CD8-positive, alpha-beta T cell (primary cell): ENCODE measurements at regions of chr17 and their contacts with region 1.

Region 1: GRCh38 chr17:4966844-4967538 is 626 bp downstream of the SPAG7 start:
- DNase-seq: peak; percentile 87 to 99 (median 94)
- ATAC-seq: peak; percentile 79
- H3K4me3 ChIP-seq: peak overlapping the region; percentile 90
- H3K4me3 Mint-ChIP-seq: no peak overlapping the region
- H3K27ac ChIP-seq: peak overlapping the region; percentile 64 to 90
- H3K27ac Mint-ChIP-seq: peak overlapping the region; percentile 53
- H3K4me1 ChIP-seq: peaks cover 22% of the 10 kb centered on the region
- H3K4me1 Mint-ChIP-seq: peaks cover 19% of the 10 kb centered on the region
- H3K27me3 ChIP-seq: no peaks in the 10 kb centered on the region
- H3K27me3 Mint-ChIP-seq: no peaks in the 10 kb centered on the region
- CTCF ChIP-seq: no peak

Region 2: DNA sequence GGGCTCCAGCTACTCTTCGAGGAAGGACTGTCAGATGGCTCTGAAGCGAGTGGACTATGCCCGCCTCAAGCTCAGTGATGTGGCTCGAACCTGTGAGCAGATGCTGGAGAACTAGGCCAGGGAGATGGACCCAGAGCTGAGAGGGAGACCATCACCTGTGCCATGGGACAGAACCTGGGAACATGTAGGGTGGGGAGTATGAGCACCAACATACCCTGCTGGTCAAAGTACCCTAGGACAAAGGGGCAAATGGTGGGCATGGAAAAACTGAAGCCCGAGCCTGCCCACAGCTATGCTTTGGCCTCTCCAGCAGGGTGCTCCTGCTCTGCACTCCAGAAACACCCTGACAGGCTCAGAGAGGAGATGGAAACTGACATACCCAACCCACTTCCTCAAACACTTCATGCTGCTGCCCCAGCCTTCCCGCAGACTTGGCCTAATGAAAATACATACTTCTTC is 233.9 kb before region 1 on chr17:
- CTCF ChIA-PET with region 1: no interaction called
- POLR2A ChIA-PET with region 1: no interaction called
- intact Hi-C with region 1: loop called in 1 of 2 experiments (anchors 1 kb)
- DNase-seq: peak in 1 of 9 experiments; percentile 45
- ATAC-seq: no peak
- H3K4me3 ChIP-seq: no peak overlapping the region
- H3K4me3 Mint-ChIP-seq: peak overlapping the region; percentile 39
- H3K27ac ChIP-seq: no peak overlapping the region
- H3K27ac Mint-ChIP-seq: no peak overlapping the region
- H3K4me1 ChIP-seq: peaks cover 24% of the 10 kb centered on the region
- H3K4me1 Mint-ChIP-seq: peaks cover 30% of the 10 kb centered on the region
- H3K27me3 ChIP-seq: no peaks in the 10 kb centered on the region
- H3K27me3 Mint-ChIP-seq: no peaks in the 10 kb centered on the region
- CTCF ChIP-seq: no peak

Region 3: DNA sequence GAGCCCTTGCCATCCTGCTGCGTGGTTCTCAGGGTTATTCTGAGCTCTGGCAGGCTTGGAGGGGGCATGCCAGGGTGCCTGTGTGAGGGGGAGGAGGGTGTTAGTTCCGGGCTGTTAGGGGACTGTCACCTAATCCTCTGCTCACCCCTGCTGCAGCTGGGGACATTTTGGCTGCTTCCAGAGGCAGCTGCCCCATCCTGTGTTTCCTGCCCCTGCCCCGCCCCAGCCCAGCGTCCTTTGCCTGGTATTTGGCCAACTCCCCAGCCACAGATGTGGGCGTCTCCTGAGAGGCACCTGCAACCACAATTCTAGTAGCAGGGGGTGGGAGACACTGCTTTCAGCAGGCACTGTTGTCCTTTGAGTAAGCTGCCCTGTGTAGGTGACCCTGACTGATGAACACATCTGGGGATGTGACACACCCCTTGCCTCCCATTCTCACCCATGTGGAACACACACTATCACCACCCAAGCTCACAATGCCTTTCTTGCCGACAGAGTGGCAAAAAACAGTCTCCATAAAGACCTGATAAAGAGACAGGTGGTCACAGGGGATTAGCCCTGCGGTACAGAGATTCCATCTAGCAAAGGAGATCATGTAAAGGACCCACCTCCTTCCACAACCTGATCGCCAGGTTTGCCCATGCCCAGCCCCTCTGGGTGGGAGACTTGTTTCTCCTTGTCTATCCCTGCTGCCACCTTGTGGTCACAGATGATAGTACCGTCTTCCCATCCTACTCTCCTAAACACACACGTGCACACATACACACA is 63.8 kb before region 1 on chr17 and contains the start of gene CHRNE:
- CTCF ChIA-PET with region 1: interaction called, 12 read pairs
- POLR2A ChIA-PET with region 1: interaction called, 6 read pairs
- intact Hi-C with region 1: loop called (anchors 1 kb)
- DNase-seq: peak; percentile 52 to 92 (median 79)
- ATAC-seq: peak; percentile 25
- H3K4me3 ChIP-seq: peak within 1 kb of the TSS; percentile 14 to 27
- H3K4me3 Mint-ChIP-seq: peak within 1 kb of the TSS; percentile 48
- H3K27ac ChIP-seq: peak within 1 kb of the TSS in 1 of 2 experiments; percentile 50
- H3K27ac Mint-ChIP-seq: peak within 1 kb of the TSS; percentile 76
- H3K4me1 ChIP-seq: peaks cover 51% of the 10 kb centered on the region
- H3K4me1 Mint-ChIP-seq: peaks cover 38% of the 10 kb centered on the region
- H3K27me3 ChIP-seq: no peaks in the 10 kb centered on the region
- H3K27me3 Mint-ChIP-seq: no peaks in the 10 kb centered on the region
- CTCF ChIP-seq: peak; percentile 94
- total RNA-seq, gene CHRNE: 5.5 to 6.1 TPM

Region 4: GRCh38 chr17:4939796-4940624 is 27.0 kb before region 1 on chr17 and contains the starts of genes RNF167 and SLC25A11:
- CTCF ChIA-PET with region 1: interaction called, 15 read pairs
- POLR2A ChIA-PET with region 1: interaction called, 175 read pairs
- intact Hi-C with region 1: loop called (anchors 1 kb)
- DNase-seq: peak; percentile 90 to 100 (median 95)
- ATAC-seq: peak; percentile 87
- H3K4me3 ChIP-seq: peak within 1 kb of the TSS; percentile 95 to 96
- H3K4me3 Mint-ChIP-seq: peak within 1 kb of the TSS; percentile 92
- H3K27ac ChIP-seq: peak within 1 kb of the TSS; percentile 83 to 92
- H3K27ac Mint-ChIP-seq: peak within 1 kb of the TSS; percentile 95
- H3K4me1 ChIP-seq: peaks cover 54% of the 10 kb centered on the region
- H3K4me1 Mint-ChIP-seq: peaks cover 60% of the 10 kb centered on the region
- H3K27me3 ChIP-seq: no peaks in the 10 kb centered on the region
- H3K27me3 Mint-ChIP-seq: no peaks in the 10 kb centered on the region
- CTCF ChIP-seq: no peak
- total RNA-seq, gene RNF167: 49.3 to 52.2 TPM
- total RNA-seq, gene SLC25A11: 15.8 to 16.3 TPM

Region 5: DNA sequence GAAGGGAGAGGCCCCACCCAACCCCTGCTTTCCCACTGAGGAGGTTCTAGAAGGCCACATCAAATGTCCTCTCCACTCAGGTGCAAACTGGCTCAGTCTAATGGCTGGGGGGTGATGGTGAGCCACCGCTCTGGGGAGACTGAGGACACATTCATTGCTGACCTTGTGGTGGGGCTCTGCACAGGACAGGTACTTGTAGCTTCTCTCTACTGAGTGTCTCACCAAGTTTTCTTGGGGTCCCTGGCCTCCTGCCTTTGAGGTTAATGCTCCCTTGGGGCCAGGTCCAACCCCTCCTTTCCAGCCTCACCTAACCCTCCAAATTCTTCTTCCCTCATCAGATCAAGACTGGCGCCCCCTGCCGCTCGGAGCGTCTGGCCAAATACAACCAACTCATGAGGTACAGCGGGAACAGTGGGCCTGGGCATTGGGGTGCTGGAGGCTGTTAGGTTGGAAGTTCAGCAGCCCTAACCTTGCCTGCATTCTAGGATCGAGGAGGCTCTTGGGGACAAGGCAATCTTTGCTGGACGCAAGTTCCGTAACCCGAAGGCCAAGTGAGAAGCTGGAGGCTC is 10.4 kb before region 1 on chr17:
- CTCF ChIA-PET with region 1: interaction called, 4 read pairs
- POLR2A ChIA-PET with region 1: interaction called, 175 read pairs
- intact Hi-C with region 1: no loop called
- DNase-seq: peak in 6 of 9 experiments; percentile 49 to 66 (median 54)
- ATAC-seq: peak; percentile 17
- H3K4me3 ChIP-seq: no peak overlapping the region
- H3K4me3 Mint-ChIP-seq: no peak overlapping the region
- H3K27ac ChIP-seq: no peak overlapping the region
- H3K27ac Mint-ChIP-seq: no peak overlapping the region
- H3K4me1 ChIP-seq: no peaks in the 10 kb centered on the region
- H3K4me1 Mint-ChIP-seq: peaks cover 8% of the 10 kb centered on the region
- H3K27me3 ChIP-seq: no peaks in the 10 kb centered on the region
- H3K27me3 Mint-ChIP-seq: no peaks in the 10 kb centered on the region
- CTCF ChIP-seq: no peak

Region 6: GRCh38 chr17:4986951-4987766 is 20.2 kb after region 1 on chr17 and contains the start of gene CAMTA2:
- CTCF ChIA-PET with region 1: interaction called, 11 read pairs
- POLR2A ChIA-PET with region 1: interaction called, 33 read pairs
- intact Hi-C with region 1: loop called (anchors 1 kb)
- DNase-seq: peak; percentile 69 to 92 (median 91)
- ATAC-seq: peak; percentile 91
- H3K4me3 ChIP-seq: peak within 1 kb of the TSS; percentile 98 to 100
- H3K4me3 Mint-ChIP-seq: peak within 1 kb of the TSS; percentile 91
- H3K27ac ChIP-seq: peak within 1 kb of the TSS; percentile 80 to 98
- H3K27ac Mint-ChIP-seq: peak within 1 kb of the TSS; percentile 95
- H3K4me1 ChIP-seq: peaks cover 27% of the 10 kb centered on the region
- H3K4me1 Mint-ChIP-seq: peaks cover 38% of the 10 kb centered on the region
- H3K27me3 ChIP-seq: no peaks in the 10 kb centered on the region
- H3K27me3 Mint-ChIP-seq: no peaks in the 10 kb centered on the region
- CTCF ChIP-seq: peak; percentile 76
- total RNA-seq, gene CAMTA2: 40.1 to 42.3 TPM

Region 7: GRCh38 chr17:5019475-5019956 is 52.5 kb after region 1 on chr17:
- CTCF ChIA-PET with region 1: no interaction called
- POLR2A ChIA-PET with region 1: interaction called, 3 read pairs
- intact Hi-C with region 1: loop called in 1 of 2 experiments (anchors 1 kb)
- DNase-seq: peak in 8 of 9 experiments; percentile 32 to 68 (median 52)
- ATAC-seq: peak; percentile 95
- H3K4me3 ChIP-seq: no peak overlapping the region
- H3K4me3 Mint-ChIP-seq: no peak overlapping the region
- H3K27ac ChIP-seq: no peak overlapping the region
- H3K27ac Mint-ChIP-seq: peak overlapping the region; percentile 75
- H3K4me1 ChIP-seq: no peaks in the 10 kb centered on the region
- H3K4me1 Mint-ChIP-seq: peaks cover 7% of the 10 kb centered on the region
- H3K27me3 ChIP-seq: no peaks in the 10 kb centered on the region
- H3K27me3 Mint-ChIP-seq: no peaks in the 10 kb centered on the region
- CTCF ChIP-seq: no peak

Region 8: GRCh38 chr17:5078106-5079028 is 111.4 kb after region 1 on chr17 and contains the start of gene ZFP3:
- CTCF ChIA-PET with region 1: no interaction called
- POLR2A ChIA-PET with region 1: no interaction called
- intact Hi-C with region 1: no loop called
- DNase-seq: peak; percentile 43 to 88 (median 73)
- ATAC-seq: peak; percentile 75
- H3K4me3 ChIP-seq: peak within 1 kb of the TSS; percentile 76 to 80
- H3K4me3 Mint-ChIP-seq: peak within 1 kb of the TSS; percentile 96
- H3K27ac ChIP-seq: peak within 1 kb of the TSS; percentile 65 to 76
- H3K27ac Mint-ChIP-seq: peak within 1 kb of the TSS; percentile 95
- H3K4me1 ChIP-seq: peaks cover 14% of the 10 kb centered on the region
- H3K4me1 Mint-ChIP-seq: peaks cover 29% of the 10 kb centered on the region
- H3K27me3 ChIP-seq: no peaks in the 10 kb centered on the region
- H3K27me3 Mint-ChIP-seq: no peaks in the 10 kb centered on the region
- CTCF ChIP-seq: peak; percentile 29
- total RNA-seq, gene ZFP3: 2.6 to 2.7 TPM